Activated CD4-positive, alpha-beta memory T cell treated with anti-CD3 and anti-CD28 coated beads for 36 hours (primary cell): ENCODE measurements at regions of chr12 and their contacts with region 1.

Region 1: GRCh38 chr12:120469450-120470149 is at the start of gene SRSF9:
- DNase-seq: peak; percentile 98
- H3K4me3 Mint-ChIP-seq: peak within 1 kb of the TSS; percentile 94
- H3K27ac Mint-ChIP-seq: peak within 1 kb of the TSS; percentile 86
- H3K4me1 Mint-ChIP-seq: peaks cover 34% of the 10 kb centered on the region
- H3K27me3 Mint-ChIP-seq: no peaks in the 10 kb centered on the region
- total RNA-seq, gene SRSF9: 218 to 221 TPM

Region 2: GRCh38 chr12:120317224-120318105 is 152.1 kb before region 1 on chr12:
- CTCF ChIA-PET with region 1: interaction called, 4 read pairs
- POLR2A ChIA-PET with region 1: no interaction called
- intact Hi-C with region 1: loop called (anchors 2 kb)
- DNase-seq: peak; percentile 100
- H3K4me3 Mint-ChIP-seq: peak overlapping the region; percentile 90
- H3K27ac Mint-ChIP-seq: peak overlapping the region; percentile 88
- H3K4me1 Mint-ChIP-seq: peaks cover 13% of the 10 kb centered on the region
- H3K27me3 Mint-ChIP-seq: no peaks in the 10 kb centered on the region

Region 3: GRCh38 chr12:120437754-120438494 is 31.7 kb before region 1 on chr12 and contains the start of gene COX6A1:
- CTCF ChIA-PET with region 1: interaction called, 7 read pairs
- POLR2A ChIA-PET with region 1: interaction called, 4 read pairs
- intact Hi-C with region 1: loop called (anchors 1 kb)
- DNase-seq: peak; percentile 99
- H3K4me3 Mint-ChIP-seq: peak within 1 kb of the TSS; percentile 99
- H3K27ac Mint-ChIP-seq: peak within 1 kb of the TSS; percentile 92
- H3K4me1 Mint-ChIP-seq: peaks cover 22% of the 10 kb centered on the region
- H3K27me3 Mint-ChIP-seq: peaks cover 2% of the 10 kb centered on the region
- total RNA-seq, gene COX6A1: 474 to 478 TPM

Region 4: DNA sequence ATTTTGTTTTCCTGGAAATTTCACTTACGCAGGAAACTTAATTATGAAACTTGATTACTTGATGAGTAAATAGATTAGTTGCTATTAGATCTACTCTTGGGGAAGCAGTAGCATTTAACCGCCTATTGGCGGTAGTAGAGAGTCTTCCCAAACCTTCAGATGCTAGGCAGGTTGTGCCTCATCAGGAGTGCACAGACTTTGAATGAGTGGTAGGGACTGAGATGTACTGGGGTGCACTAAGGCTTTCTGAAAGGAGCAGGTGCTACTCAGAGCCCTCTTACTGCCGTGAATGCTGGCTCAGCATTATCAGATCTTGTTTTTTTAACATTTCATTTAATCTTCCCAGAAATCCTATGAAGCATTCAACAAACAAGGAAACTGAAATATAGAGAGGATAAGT is 15.6 kb before region 1 on chr12:
- CTCF ChIA-PET with region 1: interaction called, 97 read pairs
- POLR2A ChIA-PET with region 1: interaction called, 6 read pairs
- intact Hi-C with region 1: loop called (anchors 1 kb)
- DNase-seq: no peak
- H3K4me3 Mint-ChIP-seq: no peak overlapping the region
- H3K27ac Mint-ChIP-seq: no peak overlapping the region
- H3K4me1 Mint-ChIP-seq: peaks cover 15% of the 10 kb centered on the region
- H3K27me3 Mint-ChIP-seq: no peaks in the 10 kb centered on the region

Region 5: DNA sequence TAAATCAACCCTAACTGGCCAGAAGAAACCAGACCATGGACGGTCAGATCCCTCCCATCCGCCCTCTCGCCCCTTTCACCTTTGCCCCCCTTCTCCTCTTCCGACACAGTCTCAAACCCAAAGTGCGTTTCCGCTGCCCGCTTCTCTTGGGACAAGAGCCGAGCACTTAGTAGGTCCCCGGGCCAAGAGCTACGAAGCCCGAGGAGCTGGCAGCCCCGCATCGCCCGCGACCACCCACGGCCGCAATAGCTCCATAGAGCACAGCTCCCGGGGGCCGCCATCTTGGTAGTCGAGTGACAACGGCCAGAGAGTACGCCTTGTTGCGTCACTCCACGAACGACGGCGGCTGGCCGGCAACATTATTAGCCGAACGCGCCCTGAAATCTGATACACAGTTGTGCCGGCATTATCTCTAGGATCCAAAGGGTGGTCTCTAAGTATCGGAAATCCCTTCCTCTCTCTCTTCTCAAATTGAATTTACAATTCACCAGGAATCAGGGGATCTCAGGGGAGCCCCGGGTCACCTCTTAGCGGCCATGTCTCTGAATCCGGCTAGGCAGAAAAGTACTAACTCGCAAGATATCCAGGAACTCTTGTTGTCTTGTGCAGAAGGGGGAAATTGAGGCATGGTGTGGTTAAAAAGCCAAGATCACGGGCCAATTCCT is 59.4 kb after region 1 on chr12 and contains the start of gene COQ5:
- CTCF ChIA-PET with region 1: interaction called, 4 read pairs
- POLR2A ChIA-PET with region 1: no interaction called
- intact Hi-C with region 1: loop called (anchors 2 kb)
- DNase-seq: peak; percentile 91
- H3K4me3 Mint-ChIP-seq: peak within 1 kb of the TSS; percentile 100
- H3K27ac Mint-ChIP-seq: peak within 1 kb of the TSS; percentile 97
- H3K4me1 Mint-ChIP-seq: peaks cover 19% of the 10 kb centered on the region
- H3K27me3 Mint-ChIP-seq: no peaks in the 10 kb centered on the region
- total RNA-seq, gene COQ5: 30.1 to 31.6 TPM

Region 6: DNA sequence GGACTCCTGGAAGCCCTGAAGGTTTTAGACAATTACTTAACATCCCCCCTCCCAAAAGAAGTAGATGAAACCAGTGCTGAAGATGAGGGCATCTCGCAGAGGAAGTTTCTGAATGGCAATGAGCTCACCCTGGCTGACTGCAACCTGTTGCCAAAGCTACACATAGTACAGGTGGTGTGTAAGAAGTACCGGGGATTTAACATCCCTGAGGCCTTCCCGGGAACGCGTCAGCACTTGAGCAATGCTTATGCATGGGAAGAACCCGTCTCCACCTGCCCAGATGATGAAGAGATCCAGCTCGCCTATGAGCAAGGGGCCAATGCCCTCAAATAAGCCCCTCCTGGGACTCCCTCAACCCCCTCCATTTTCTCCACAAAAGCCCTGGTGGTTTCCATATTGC is 445.2 kb after region 1 on chr12:
- CTCF ChIA-PET with region 1: no interaction called
- POLR2A ChIA-PET with region 1: no interaction called
- intact Hi-C with region 1: no loop called
- DNase-seq: no peak
- H3K4me3 Mint-ChIP-seq: no peak overlapping the region
- H3K27ac Mint-ChIP-seq: no peak overlapping the region
- H3K4me1 Mint-ChIP-seq: peaks cover 2% of the 10 kb centered on the region
- H3K27me3 Mint-ChIP-seq: peaks cover 2% of the 10 kb centered on the region